Dendritic cell treated with granulocyte-macrophage colony-stimulating factor and Interleukin-4, amounts not matched to agents 40 ng/mL and 50 ng/mL, for 4 days (primary cell): ENCODE measurements at regions of chr1 and their contacts with region 1.

Region 1: DNA sequence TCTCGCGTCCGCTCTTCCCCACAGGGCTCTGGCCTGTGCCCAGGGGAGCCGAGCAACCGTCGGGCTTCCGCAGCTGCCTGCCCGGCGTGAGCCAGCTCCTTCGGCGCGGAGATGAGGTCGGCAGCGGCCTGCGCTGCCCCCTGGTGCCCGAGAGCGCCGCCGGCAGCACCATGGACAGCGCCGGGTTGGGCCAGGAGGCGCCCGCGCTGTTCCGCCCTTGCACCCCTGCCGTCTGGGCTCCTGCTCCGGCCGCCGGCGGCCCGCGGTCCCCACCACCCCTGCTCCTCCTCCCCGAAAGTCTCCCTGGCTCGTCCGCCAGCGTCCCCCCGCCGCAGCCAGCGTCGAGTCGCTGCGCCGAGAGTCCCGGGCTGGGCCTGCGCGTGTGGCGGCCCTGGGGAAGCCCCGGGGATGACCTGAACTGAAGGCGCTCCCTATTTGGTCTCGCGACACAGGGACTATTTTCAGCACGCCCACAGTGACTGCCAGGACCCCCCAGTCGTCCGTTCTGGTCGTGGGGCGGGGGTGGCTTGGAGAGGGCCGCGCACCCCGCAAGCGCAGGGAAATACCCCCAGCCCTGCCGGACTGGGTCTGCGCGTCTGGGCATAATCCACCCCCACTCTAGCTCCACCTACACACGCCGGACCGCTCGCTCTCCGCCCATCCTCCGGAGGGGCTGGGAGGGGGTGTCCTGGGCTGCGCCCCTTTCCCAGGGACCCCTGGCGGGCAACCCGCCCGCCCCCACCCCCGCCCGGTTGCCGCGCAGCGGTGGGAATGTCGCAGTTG is 1.3 kb downstream of the HES3 start:
- H3K4me3 Mint-ChIP-seq: no peak overlapping the region
- H3K27ac Mint-ChIP-seq: no peak overlapping the region
- H3K4me1 Mint-ChIP-seq: peaks cover 36% of the 10 kb centered on the region
- H3K27me3 Mint-ChIP-seq: peaks cover 85% of the 10 kb centered on the region

Region 2: DNA sequence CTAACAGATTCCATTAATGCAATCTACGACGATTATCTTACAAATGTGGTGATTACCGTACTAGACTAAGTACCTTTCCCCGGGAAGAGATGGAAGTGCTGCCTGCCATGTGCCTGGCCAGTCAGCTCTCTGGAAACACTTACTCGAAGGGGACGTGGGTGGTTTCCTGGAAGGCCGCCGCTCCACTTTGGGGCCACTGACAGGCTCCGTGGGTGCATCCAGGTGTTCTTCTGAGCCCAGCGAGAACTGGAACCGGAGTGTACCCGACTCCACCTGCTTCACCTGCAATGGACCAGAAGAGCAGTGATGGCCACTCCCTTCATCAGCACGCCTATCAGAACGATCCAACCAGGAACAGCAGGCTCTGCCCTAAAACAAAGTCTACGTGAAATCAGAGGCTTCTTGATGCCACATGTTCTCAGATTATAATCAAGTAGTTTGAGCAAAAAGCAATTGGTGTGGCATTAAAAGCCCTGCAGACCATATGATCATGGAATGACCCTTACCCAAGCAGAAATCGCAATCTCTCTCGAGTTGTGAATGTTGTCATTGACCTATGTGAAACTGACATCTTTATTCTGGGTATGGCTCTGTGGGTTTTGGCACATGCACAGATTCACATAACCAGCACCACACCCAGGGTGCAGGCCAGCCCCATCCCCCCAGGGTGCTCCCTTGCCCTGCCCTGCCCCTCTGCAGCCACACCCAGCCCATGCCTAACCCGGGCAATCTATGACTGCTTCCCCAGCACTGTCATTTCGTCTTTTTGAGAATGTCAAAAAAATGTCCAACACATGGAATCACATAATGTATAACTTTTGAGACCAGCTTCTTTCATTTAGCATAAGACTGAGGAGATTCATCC is 317.5 kb before region 1 on chr1:
- intact Hi-C with region 1: no loop called
- H3K4me3 Mint-ChIP-seq: no peak overlapping the region
- H3K27ac Mint-ChIP-seq: no peak overlapping the region
- H3K4me1 Mint-ChIP-seq: no peaks in the 10 kb centered on the region
- H3K27me3 Mint-ChIP-seq: no peaks in the 10 kb centered on the region

Region 3: GRCh38 chr1:6052543-6053205 is 192.6 kb before region 1 on chr1:
- intact Hi-C with region 1: loop called (anchors 5 kb)
- H3K4me3 Mint-ChIP-seq: no peak overlapping the region
- H3K27ac Mint-ChIP-seq: peak overlapping the region; percentile 30
- H3K4me1 Mint-ChIP-seq: peaks cover 71% of the 10 kb centered on the region
- H3K27me3 Mint-ChIP-seq: no peaks in the 10 kb centered on the region

Region 4: DNA sequence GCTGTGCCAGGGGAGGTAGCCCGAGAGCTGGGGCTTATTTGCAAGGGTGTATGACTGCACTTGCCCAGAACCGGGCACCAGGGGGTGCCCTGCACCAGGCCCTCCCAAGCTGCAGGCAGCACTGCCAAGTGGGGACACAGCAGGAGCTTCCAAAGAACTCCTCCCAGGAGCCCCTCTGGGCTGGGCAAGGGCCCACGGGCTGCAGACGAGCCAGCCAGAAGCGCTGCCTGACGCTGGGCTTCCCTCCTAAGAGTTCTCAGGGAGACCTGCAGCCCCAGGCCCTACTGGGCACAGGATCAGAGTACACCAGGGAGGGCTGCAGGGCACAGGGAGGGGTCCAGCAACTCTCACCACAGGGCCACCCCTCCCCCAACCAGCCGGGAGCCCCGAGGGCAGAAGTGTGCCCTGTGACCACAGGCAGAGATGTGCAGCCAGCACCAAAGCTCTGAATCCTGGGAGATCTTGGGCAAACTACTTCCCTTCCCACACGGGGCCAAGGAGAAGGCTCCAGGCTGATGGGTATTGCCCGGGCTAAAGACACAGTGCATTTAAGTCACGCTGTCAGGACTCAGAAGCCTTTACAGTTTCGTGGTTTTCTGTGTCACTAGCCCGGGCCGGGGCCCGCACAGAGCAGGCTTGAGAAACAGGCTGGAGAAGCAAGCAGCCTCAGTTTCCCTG is 136.2 kb before region 1 on chr1:
- intact Hi-C with region 1: loop called (anchors 1 kb)
- H3K4me3 Mint-ChIP-seq: no peak overlapping the region
- H3K27ac Mint-ChIP-seq: no peak overlapping the region
- H3K4me1 Mint-ChIP-seq: no peaks in the 10 kb centered on the region
- H3K27me3 Mint-ChIP-seq: peaks cover 42% of the 10 kb centered on the region

Region 5: GRCh38 chr1:6343506-6344405 is 98.5 kb after region 1 on chr1:
- intact Hi-C with region 1: loop called (anchors 1 kb)
- H3K4me3 Mint-ChIP-seq: no peak overlapping the region
- H3K27ac Mint-ChIP-seq: no peak overlapping the region
- H3K4me1 Mint-ChIP-seq: peaks cover 17% of the 10 kb centered on the region
- H3K27me3 Mint-ChIP-seq: no peaks in the 10 kb centered on the region

Region 6: GRCh38 chr1:6367381-6368012 is 122.2 kb after region 1 on chr1:
- intact Hi-C with region 1: no loop called
- H3K4me3 Mint-ChIP-seq: no peak overlapping the region
- H3K27ac Mint-ChIP-seq: no peak overlapping the region
- H3K4me1 Mint-ChIP-seq: peaks cover 19% of the 10 kb centered on the region
- H3K27me3 Mint-ChIP-seq: no peaks in the 10 kb centered on the region

Region 7: DNA sequence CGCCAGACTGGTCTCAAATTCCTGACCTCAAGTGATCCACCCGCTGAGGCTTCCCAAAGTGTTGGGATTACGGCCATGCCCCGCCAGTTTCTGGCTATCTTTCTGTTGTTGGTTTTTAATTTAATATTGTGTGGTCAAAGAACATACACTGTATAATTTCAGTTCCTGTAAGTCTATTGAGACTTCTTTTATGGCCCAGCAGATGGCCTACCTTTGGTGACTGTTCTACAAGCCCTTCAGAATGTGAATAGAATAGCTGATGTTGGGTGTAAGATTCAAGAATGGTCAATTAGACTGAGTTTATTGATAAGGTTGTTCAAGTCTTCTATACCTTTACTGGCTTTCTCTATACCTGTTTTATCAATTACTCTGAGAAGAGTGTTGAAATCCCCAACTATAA is 163.8 kb after region 1 on chr1:
- intact Hi-C with region 1: loop called (anchors 5 kb)
- H3K4me3 Mint-ChIP-seq: no peak overlapping the region
- H3K27ac Mint-ChIP-seq: no peak overlapping the region
- H3K4me1 Mint-ChIP-seq: peaks cover under 1% of the 10 kb centered on the region
- H3K27me3 Mint-ChIP-seq: peaks cover 53% of the 10 kb centered on the region

Region 8: DNA sequence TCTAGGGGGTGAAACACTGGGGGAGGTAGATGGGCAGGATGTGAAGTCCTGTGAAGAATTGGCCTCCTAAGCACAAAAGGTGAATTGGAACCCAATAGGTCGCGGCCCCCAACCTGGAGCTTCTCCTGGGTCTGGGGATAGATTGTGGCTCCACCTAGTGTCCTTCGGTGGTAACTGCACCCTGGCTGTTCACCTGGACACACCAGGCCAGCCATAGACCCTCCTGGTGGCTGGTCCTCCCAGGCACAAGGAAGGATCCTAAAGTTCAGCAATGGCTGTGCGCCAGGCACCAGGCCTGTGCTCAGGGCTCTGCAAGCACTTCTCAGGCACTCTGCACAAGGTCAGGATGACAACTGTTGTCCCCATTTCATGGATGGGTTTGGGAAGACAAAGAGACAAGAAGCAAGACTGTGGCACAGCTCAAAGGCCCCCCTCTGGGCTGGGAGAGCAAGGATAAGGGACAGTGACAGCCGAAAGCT is 192.8 kb after region 1 on chr1:
- intact Hi-C with region 1: loop called (anchors 10 kb)
- H3K4me3 Mint-ChIP-seq: no peak overlapping the region
- H3K27ac Mint-ChIP-seq: no peak overlapping the region
- H3K4me1 Mint-ChIP-seq: no peaks in the 10 kb centered on the region
- H3K27me3 Mint-ChIP-seq: peaks cover 53% of the 10 kb centered on the region